ENCODE measurements at regions of chr2 and their contacts with region 1.

Region 1: GRCh38 chr2:134359367-134360081 is 105.7 kb downstream of the MGAT5 start:
- DNase-seq: no peak
- ATAC-seq: no peak
- H3K4me3 ChIP-seq: no peak overlapping the region
- H3K27ac ChIP-seq: no peak overlapping the region
- H3K4me1 ChIP-seq: no peaks in the 10 kb centered on the region
- H3K27me3 ChIP-seq: no peaks in the 10 kb centered on the region
- CTCF ChIP-seq: no peak

Region 2: DNA sequence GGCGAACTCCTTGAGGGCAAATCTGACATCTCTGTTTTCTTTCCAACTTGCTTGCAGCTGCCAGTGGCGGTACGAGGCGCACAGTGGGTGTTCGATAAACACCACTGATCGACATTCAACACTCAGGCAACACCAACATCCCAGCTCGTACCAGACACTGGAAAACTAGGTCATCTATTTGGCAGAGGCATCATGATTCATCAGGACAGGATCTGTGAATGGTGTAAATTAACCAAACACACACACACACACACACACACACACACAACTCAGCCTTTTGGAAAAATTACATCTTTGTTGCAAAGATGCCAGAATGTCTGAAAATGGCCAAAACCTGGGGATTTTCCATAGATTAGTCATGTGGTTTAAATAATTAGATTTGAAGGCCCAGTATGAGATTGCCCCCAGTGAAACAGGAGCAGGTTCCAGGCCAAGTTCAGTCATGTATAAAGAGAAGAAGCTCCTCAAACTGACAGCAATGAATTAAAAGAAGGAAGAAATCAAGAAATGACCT is 640.8 kb before region 1 on chr2:
- CTCF ChIA-PET with region 1: no interaction called
- POLR2A ChIA-PET with region 1: no interaction called
- in situ Hi-C with region 1: no loop called
- intact Hi-C with region 1: no loop called
- DNase-seq: no peak
- ATAC-seq: no peak
- H3K4me3 ChIP-seq: no peak overlapping the region
- H3K27ac ChIP-seq: no peak overlapping the region
- H3K4me1 ChIP-seq: no peaks in the 10 kb centered on the region
- H3K27me3 ChIP-seq: no peaks in the 10 kb centered on the region
- CTCF ChIP-seq: no peak

Region 3: GRCh38 chr2:134198006-134198634 is 161.4 kb before region 1 on chr2:
- CTCF ChIA-PET with region 1: no interaction called
- POLR2A ChIA-PET with region 1: no interaction called
- in situ Hi-C with region 1: no loop called
- intact Hi-C with region 1: no loop called
- DNase-seq: no peak
- ATAC-seq: no peak
- H3K4me3 ChIP-seq: no peak overlapping the region
- H3K27ac ChIP-seq: no peak overlapping the region
- H3K4me1 ChIP-seq: no peaks in the 10 kb centered on the region
- H3K27me3 ChIP-seq: no peaks in the 10 kb centered on the region
- CTCF ChIP-seq: no peak

Region 4: DNA sequence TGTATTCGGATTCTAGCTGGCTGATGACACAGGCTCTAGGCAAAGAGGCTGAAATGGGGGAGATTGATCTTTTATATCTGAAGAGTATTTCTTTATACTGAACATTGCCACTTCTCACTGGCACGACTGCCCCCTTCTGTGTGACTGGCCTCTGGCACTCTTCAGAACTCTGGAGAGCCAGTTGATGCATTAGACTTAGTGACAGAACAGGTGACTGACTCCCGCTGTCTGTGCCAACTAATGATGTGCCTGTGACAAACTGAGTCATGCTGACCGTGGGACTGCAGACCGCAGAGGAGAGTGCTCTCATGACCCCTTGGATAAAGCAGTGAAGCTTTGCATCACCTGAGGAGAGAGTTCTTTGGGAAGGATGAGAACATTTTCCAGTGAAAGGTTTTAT is 91.3 kb before region 1 on chr2:
- CTCF ChIA-PET with region 1: no interaction called
- POLR2A ChIA-PET with region 1: no interaction called
- in situ Hi-C with region 1: no loop called
- intact Hi-C with region 1: loop called (anchors 5 kb)
- DNase-seq: no peak
- ATAC-seq: no peak; the same call in 1 of the 2 replicates
- H3K4me3 ChIP-seq: no peak overlapping the region
- H3K27ac ChIP-seq: no peak overlapping the region
- H3K4me1 ChIP-seq: no peaks in the 10 kb centered on the region
- H3K27me3 ChIP-seq: no peaks in the 10 kb centered on the region
- CTCF ChIP-seq: no peak